ENCODE measurements at regions of chr19 and their contacts with region 1.

Region 1: DNA sequence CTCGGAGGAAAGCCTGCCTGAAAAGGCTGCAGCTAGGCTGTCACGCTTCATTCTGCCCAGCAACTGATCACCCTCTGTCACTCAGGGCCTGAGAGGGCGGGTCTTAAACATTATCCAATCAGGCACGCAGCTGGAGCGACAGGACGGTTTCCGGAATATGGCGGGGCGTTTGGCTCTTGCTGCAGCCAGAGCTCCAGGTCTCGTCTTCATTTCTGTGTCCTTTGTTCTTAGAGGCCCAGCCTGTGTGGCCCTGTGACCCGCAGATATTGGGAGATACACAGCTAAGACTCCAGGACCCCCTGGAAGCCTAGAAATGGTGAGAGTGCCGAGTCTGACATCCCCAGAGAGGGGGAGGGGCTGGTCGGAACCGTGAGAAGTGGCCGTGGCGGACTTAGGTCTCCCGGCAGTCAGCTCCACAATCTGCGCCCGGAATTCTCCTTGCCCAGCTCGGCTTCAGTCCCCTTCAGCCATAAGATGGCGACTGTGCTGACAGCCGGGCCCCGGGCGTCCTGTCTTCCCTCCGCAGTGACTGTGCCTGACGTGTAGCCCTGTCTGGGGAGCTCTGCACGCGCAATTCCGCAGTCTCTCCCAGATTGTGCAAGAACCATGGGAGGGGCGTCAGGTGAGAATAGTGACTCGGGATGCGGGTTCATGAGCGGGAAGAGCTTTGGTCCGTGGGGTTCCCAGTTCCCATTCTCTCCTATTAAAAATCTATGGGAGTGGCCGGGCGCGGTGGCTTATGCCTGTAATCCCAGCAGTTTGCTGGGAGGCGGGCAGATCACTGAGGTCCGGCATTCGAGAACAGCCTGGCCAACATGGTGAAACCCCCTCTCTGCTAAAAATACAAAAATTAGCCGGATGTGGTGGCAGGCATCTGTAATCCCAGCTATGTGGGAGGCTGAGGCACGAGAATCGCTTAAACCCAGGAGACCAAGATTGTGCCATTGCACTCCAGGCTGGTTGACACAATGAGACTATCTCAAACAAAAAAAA is at the start of gene ZNF429:
- DNase-seq: peak; percentile 84
- H3K4me3 Mint-ChIP-seq: peak within 1 kb of the TSS; percentile 98
- H3K27ac Mint-ChIP-seq: peak within 1 kb of the TSS; percentile 89
- H3K4me1 Mint-ChIP-seq: peaks cover 9% of the 10 kb centered on the region
- H3K27me3 Mint-ChIP-seq: no peaks in the 10 kb centered on the region
- total RNA-seq, gene ZNF429: 2.6 and 3.2 TPM in 2 replicates

Region 2: DNA sequence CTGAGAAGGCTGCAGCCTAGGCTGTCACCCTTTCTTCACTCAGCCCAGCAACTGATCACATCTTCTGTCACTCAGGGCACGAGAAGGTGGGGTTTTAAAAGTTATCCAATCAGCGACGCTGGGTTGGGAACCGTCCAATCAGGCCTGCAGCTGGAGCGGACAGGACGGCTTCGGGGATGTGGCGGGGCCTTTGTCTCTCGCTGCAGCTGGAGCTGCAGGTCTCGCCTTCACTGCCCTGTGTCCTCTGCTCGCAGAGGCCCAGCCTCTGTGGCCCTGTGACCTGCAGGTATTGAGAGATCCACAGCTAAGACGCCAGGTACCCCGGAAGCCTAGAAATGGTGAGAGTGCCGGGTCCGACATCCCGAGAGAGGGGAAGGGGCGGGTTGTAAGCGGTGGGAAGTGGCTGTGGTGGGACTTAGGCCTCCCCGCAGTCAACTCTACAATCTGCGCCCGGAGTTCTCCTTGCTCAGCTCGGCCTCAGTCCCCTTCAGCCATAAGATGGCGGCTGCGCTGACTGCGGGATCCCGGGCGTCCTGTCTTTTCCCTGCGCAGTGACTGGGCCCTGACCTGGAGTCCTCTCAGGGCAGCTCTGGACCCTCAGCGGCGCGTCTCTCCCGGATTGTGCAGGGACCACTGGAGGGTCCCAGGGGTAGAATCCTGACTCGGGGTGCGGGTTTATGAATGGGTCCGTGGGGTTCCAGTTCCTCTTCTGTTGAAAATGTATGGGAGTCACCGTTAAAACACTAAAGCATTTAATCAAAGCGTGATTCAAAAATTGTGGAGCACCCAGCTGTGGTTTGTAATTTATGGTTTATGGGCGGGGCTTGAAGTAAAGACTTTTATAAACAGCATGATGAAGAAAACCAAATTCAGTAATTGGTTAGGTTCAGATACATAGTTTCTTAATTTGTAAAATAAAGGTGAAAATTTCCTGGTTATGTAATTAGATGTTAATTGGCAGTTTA is 423.5 kb before region 1 on chr19 and contains the start of gene ZNF714:
- intact Hi-C with region 1: loop called (anchors 1 kb)
- DNase-seq: peak; percentile 86
- H3K4me3 Mint-ChIP-seq: peak within 1 kb of the TSS; percentile 99
- H3K27ac Mint-ChIP-seq: peak within 1 kb of the TSS; percentile 98
- H3K4me1 Mint-ChIP-seq: peaks cover 31% of the 10 kb centered on the region
- H3K27me3 Mint-ChIP-seq: no peaks in the 10 kb centered on the region
- total RNA-seq, gene ZNF714: 18.5 and 19.5 TPM in 2 replicates

Region 3: GRCh38 chr19:21358768-21359451 is 146.8 kb before region 1 on chr19 and contains the start of gene ZNF738:
- intact Hi-C with region 1: loop called (anchors 1 kb)
- DNase-seq: peak; percentile 77
- H3K4me3 Mint-ChIP-seq: peak within 1 kb of the TSS; percentile 100
- H3K27ac Mint-ChIP-seq: peak within 1 kb of the TSS; percentile 97
- H3K4me1 Mint-ChIP-seq: no peaks in the 10 kb centered on the region
- H3K27me3 Mint-ChIP-seq: no peaks in the 10 kb centered on the region
- total RNA-seq, gene ZNF738: 9.7 and 11.7 TPM in 2 replicates

Region 4: DNA sequence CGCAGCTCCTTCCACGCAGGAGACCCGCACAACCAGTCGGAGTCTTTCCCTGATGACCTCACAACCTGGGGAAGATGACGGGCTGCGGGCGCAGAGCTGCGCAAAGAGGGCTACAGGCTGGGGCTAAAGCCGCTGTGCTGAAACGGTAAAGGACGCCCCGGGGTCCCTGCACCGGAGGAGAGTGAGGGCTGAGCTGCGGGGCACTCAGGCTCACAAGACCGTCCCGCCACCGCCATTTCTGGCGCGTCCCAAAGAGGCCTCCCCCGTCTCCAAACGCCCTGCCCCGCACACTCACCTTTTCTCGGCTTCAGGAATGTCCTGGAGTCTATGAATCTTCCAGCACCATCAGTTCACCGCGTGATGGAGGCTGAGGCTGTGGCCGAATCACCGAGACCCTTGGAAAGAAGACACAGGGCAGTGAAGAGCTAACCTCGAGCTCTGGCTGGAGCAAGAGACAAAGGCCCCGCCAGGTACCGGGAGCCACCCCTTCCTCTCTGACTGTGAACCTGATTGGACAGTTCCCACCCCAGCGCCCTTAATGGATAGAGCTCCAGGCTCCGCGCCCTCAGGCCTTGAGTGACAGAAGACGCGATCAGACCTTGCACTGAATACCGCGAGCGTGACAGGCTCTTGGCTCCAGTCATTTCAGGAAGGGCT is 42.2 kb before region 1 on chr19:
- intact Hi-C with region 1: no loop called
- DNase-seq: no peak
- H3K4me3 Mint-ChIP-seq: peak overlapping the region; percentile 81
- H3K27ac Mint-ChIP-seq: no peak overlapping the region
- H3K4me1 Mint-ChIP-seq: no peaks in the 10 kb centered on the region
- H3K27me3 Mint-ChIP-seq: no peaks in the 10 kb centered on the region

Region 5: GRCh38 chr19:21655540-21656126 is 149.9 kb after region 1 on chr19:
- intact Hi-C with region 1: loop called (anchors 5 kb)
- DNase-seq: no peak
- H3K4me3 Mint-ChIP-seq: no peak overlapping the region
- H3K27ac Mint-ChIP-seq: no peak overlapping the region
- H3K4me1 Mint-ChIP-seq: no peaks in the 10 kb centered on the region
- H3K27me3 Mint-ChIP-seq: no peaks in the 10 kb centered on the region

Region 6: GRCh38 chr19:21851596-21852345 is 346.0 kb after region 1 on chr19:
- intact Hi-C with region 1: loop called (anchors 5 kb)
- DNase-seq: peak; percentile 80
- H3K4me3 Mint-ChIP-seq: peak overlapping the region; percentile 90
- H3K27ac Mint-ChIP-seq: peak overlapping the region; percentile 87
- H3K4me1 Mint-ChIP-seq: peaks cover 21% of the 10 kb centered on the region
- H3K27me3 Mint-ChIP-seq: no peaks in the 10 kb centered on the region

Measured in activated T-helper 1 cell treated with anti-CD3 and anti-CD28 coated beads, Interleukin-12 subunit alpha, Interleukin-12 subunit beta, Interleukin-2, Interleukin-4 antibody, amounts not matched to agents 30 ng/mL and 10 ng/mL and 1 ng/mL, durations not matched to agents 14 hours and 24 hours and 36 hours (primary cell).